Activated T-helper 1 cell treated with anti-CD3 and anti-CD28 coated beads, Interleukin-12 subunit alpha, Interleukin-12 subunit beta, Interleukin-2, Interleukin-4 antibody, amounts not matched to agents 30 ng/mL and 10 ng/mL and 1 ng/mL, durations not matched to agents 14 hours and 24 hours and 36 hours (primary cell): ENCODE measurements at regions of chr11 and their contacts with region 1.

Region 1: GRCh38 chr11:3905080-3905953 is 49.9 kb downstream of the STIM1 start:
- DNase-seq: peak; percentile 54
- H3K4me3 Mint-ChIP-seq: peak overlapping the region; percentile 48
- H3K27ac Mint-ChIP-seq: peak overlapping the region; percentile 76
- H3K4me1 Mint-ChIP-seq: peaks cover 61% of the 10 kb centered on the region
- H3K27me3 Mint-ChIP-seq: no peaks in the 10 kb centered on the region

Region 2: DNA sequence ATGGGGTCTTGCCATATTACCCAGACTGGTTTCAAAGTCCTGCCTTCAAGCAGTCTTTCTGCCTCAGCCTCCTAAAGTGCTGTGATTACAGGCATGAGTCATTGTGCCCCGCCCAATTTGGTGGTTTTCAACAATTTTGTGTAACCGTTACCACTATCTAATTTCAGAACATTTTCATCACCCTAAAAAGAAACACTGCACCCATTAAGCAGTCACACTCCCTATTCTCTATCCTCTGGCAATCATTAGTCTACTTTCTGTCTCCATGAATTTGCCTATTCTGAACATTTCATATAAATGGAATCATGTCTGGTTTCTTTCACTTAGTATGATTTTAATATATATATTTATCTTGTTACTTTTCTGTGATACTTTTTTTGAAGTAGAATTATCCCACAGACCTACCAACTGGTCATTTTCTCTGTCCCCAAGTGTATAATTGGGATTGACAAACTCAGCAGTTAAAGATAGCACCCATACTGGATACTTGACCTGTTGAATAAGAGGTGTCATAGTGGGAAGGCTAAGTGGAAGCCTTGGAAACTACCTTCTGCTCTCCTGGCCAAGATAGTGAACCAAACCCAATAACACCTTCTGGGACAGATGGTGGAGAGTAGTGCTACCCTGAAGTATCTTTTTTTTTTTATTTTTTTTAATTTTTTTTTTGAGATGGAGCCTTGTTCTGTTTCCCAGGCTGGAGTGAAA is 15.0 kb after region 1 on chr11:
- intact Hi-C with region 1: loop called (anchors 2 kb)
- DNase-seq: peak; percentile 59
- H3K4me3 Mint-ChIP-seq: no peak overlapping the region
- H3K27ac Mint-ChIP-seq: peak overlapping the region; percentile 43
- H3K4me1 Mint-ChIP-seq: peaks cover 55% of the 10 kb centered on the region
- H3K27me3 Mint-ChIP-seq: no peaks in the 10 kb centered on the region

Region 3: GRCh38 chr11:3959015-3959919 is 54.0 kb after region 1 on chr11:
- intact Hi-C with region 1: loop called (anchors 2 kb)
- DNase-seq: no peak
- H3K4me3 Mint-ChIP-seq: no peak overlapping the region
- H3K27ac Mint-ChIP-seq: no peak overlapping the region
- H3K4me1 Mint-ChIP-seq: peaks cover 70% of the 10 kb centered on the region
- H3K27me3 Mint-ChIP-seq: no peaks in the 10 kb centered on the region

Region 4: GRCh38 chr11:3995949-3996554 is 90.7 kb after region 1 on chr11:
- intact Hi-C with region 1: no loop called
- DNase-seq: no peak
- H3K4me3 Mint-ChIP-seq: no peak overlapping the region
- H3K27ac Mint-ChIP-seq: no peak overlapping the region
- H3K4me1 Mint-ChIP-seq: peaks cover 21% of the 10 kb centered on the region
- H3K27me3 Mint-ChIP-seq: no peaks in the 10 kb centered on the region